ENCODE measurements at regions of chr10 and their contacts with region 1.

Region 1: DNA sequence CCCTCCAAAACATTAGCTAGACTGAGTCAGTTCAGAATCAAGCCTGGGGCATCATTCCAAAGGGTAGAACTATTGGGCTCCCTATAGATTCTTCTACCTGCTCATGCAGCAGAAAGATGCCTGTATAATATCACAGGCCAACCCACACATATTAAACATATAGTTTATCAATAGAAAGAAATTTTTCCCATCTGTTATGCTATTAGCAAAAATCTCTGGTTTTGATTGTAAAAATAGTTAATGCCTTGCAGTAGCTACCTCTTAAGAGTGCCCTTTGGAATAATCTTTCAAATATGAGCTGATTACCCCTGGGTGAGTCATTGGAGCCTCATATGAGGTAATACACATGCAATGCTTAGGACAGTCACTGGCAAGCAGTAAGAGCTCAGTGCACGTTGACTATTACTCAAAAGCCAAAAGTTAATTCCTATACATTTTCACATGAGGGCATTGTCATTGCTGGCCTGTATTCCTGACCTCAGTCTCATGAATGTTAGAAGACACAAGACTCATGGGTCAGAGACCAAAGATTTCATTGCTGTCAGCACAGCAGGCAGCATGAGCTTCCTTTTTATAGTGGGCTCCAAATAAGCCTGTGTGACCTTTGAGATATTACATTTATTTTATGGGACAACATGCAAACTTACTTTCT is 180.0 kb downstream of the FGFR2 start:
- DNase-seq: no peak
- H3K4me3 ChIP-seq: no peak overlapping the region
- H3K27ac ChIP-seq: no peak overlapping the region
- H3K4me1 ChIP-seq: peaks cover 4 to 17% of the 10 kb centered on the region in 2 donors
- H3K27me3 ChIP-seq: no peaks in the 10 kb centered on the region
- CTCF ChIP-seq: no peak
- POLR2A ChIP-seq: no peak

Region 2: GRCh38 chr10:121598207-121598862 is 180.1 kb after region 1 on chr10 and contains the start of gene FGFR2:
- intact Hi-C with region 1: loop called (anchors 10 kb)
- DNase-seq: peak; percentile 88 to 91
- H3K4me3 ChIP-seq: peak within 1 kb of the TSS; percentile 9 to 67 (median 52)
- H3K27ac ChIP-seq: peak within 1 kb of the TSS; percentile 58 to 81 (median 70)
- H3K4me1 ChIP-seq: peaks cover 11 to 16% of the 10 kb centered on the region in 2 donors
- H3K27me3 ChIP-seq: no peaks in the 10 kb centered on the region
- CTCF ChIP-seq: peak in 1 of 6 experiments; percentile 7
- POLR2A ChIP-seq: peak; percentile 91 to 97
- total RNA-seq, gene FGFR2: 65.6 to 149 (median 122) TPM

Measured in thyroid gland (tissue), 4 donors.